ENCODE measurements at regions of chr5 and their contacts with region 1.

Region 1: GRCh38 chr5:121968910-121969607 is 7.3 kb downstream of the SRFBP1 start:
- DNase-seq: no peak
- ATAC-seq: no peak
- H3K4me3 ChIP-seq: no peak overlapping the region
- H3K4me3 Mint-ChIP-seq: no peak overlapping the region
- H3K27ac ChIP-seq: no peak overlapping the region
- H3K27ac Mint-ChIP-seq: peak overlapping the region in 1 of 9 donors; percentile 27
- H3K4me1 ChIP-seq: no peaks in the 10 kb centered on the region
- H3K4me1 Mint-ChIP-seq: peaks cover 12 to 43% (median 40%) of the 10 kb centered on the region in 7 donors
- H3K27me3 ChIP-seq: no peaks in the 10 kb centered on the region
- H3K27me3 Mint-ChIP-seq: no peaks in the 10 kb centered on the region

Region 2: GRCh38 chr5:122101636-122102285 is 132.7 kb after region 1 on chr5:
- CTCF ChIA-PET with region 1: no interaction called
- POLR2A ChIA-PET with region 1: no interaction called
- intact Hi-C with region 1: loop called (anchors 1 to 10 kb)
- DNase-seq: peak in 2 of 9 donors; percentile 1 to 17
- ATAC-seq: no peak
- H3K4me3 ChIP-seq: no peak overlapping the region
- H3K4me3 Mint-ChIP-seq: no peak overlapping the region
- H3K27ac ChIP-seq: no peak overlapping the region
- H3K27ac Mint-ChIP-seq: no peak overlapping the region
- H3K4me1 ChIP-seq: no peaks in the 10 kb centered on the region
- H3K4me1 Mint-ChIP-seq: no peaks in the 10 kb centered on the region
- H3K27me3 ChIP-seq: no peaks in the 10 kb centered on the region
- H3K27me3 Mint-ChIP-seq: peaks cover 0 to 4% (median 0%) of the 10 kb centered on the region in 5 donors

Region 3: DNA sequence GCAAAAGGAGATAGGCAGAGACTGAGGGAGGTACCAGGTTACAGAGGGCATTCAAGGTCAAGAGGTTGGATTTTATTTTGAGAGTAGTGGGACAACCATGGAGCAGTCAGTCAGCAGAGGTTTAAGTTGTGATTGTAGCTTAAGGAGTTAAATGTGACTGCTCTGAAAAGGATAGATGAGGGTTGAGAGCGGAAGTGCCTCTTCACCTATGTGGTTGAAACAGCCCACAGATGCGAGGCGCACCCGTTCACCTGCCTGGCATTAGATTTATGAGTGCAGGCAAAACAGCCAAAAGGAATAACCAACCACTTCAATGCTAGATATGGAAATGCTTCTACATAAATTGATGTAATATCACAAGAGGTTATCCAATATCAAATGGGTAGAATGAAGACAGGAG is 168.6 kb after region 1 on chr5:
- CTCF ChIA-PET with region 1: no interaction called
- POLR2A ChIA-PET with region 1: no interaction called
- intact Hi-C with region 1: loop called in 1 of 2 experiments (anchors 5 kb)
- DNase-seq: peak in 7 of 9 donors; percentile 15 to 54 (median 47)
- ATAC-seq: peak; percentile 81
- H3K4me3 ChIP-seq: no peak overlapping the region
- H3K4me3 Mint-ChIP-seq: peak overlapping the region in 9 of 10 donors; percentile 12 to 67 (median 51)
- H3K27ac ChIP-seq: no peak overlapping the region
- H3K27ac Mint-ChIP-seq: peak overlapping the region in 2 of 9 donors; percentile 6 to 38
- H3K4me1 ChIP-seq: peaks cover 0 to 14% of the 10 kb centered on the region in 2 donors
- H3K4me1 Mint-ChIP-seq: peaks cover 6 to 21% (median 19%) of the 10 kb centered on the region in 7 donors
- H3K27me3 ChIP-seq: no peaks in the 10 kb centered on the region
- H3K27me3 Mint-ChIP-seq: peaks cover 0 to 15% (median 4%) of the 10 kb centered on the region in 5 donors

Measured in naive thymus-derived CD4-positive, alpha-beta T cell (primary cell).